WTC11 (cell line): ENCODE measurements at regions of chr4 and their contacts with region 1.

Region 1: GRCh38 chr4:36399762-36400353 is 118.4 kb downstream of the DTHD1 start:
- DNase-seq: peak; percentile 12
- ATAC-seq: no peak
- H3K4me3 Mint-ChIP-seq: no peak overlapping the region
- H3K27ac Mint-ChIP-seq: no peak overlapping the region
- H3K4me1 Mint-ChIP-seq: no peaks in the 10 kb centered on the region
- H3K27me3 Mint-ChIP-seq: no peaks in the 10 kb centered on the region
- CTCF ChIP-seq: no peak

Region 2: GRCh38 chr4:36351082-36351666 is 48.7 kb before region 1 on chr4:
- CTCF ChIA-PET with region 1: interaction called, 11 read pairs
- POLR2A ChIA-PET with region 1: no interaction called
- DNase-seq: peak; percentile 65
- ATAC-seq: peak; percentile 73
- H3K4me3 Mint-ChIP-seq: no peak overlapping the region
- H3K27ac Mint-ChIP-seq: no peak overlapping the region
- H3K4me1 Mint-ChIP-seq: peaks cover 13% of the 10 kb centered on the region
- H3K27me3 Mint-ChIP-seq: no peaks in the 10 kb centered on the region
- CTCF ChIP-seq: peak; percentile 64

Region 3: DNA sequence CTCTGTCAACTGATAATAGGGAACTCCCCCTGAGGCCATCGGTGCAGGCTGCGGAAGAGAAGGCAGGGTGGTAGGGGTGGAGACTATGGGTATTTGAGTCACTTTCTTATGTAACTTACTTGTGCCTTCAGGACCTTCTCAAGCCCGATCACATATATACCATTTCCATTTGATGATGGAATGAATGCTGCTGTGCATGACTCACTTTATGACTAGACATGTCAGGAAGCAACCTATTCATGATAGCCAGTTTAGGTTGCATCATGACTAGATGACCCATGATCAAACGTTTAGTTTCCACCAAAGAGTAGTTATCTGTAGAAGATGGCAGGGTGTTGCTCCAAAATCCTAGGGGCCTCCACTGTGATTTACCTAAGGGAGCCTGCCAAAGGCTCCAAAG is 317.0 kb after region 1 on chr4:
- CTCF ChIA-PET with region 1: no interaction called
- POLR2A ChIA-PET with region 1: no interaction called
- DNase-seq: no peak
- ATAC-seq: no peak
- H3K4me3 Mint-ChIP-seq: no peak overlapping the region
- H3K27ac Mint-ChIP-seq: no peak overlapping the region
- H3K4me1 Mint-ChIP-seq: peaks cover 8% of the 10 kb centered on the region
- H3K27me3 Mint-ChIP-seq: no peaks in the 10 kb centered on the region; the same call in 1 of the 2 replicates
- CTCF ChIP-seq: no peak